Activated B cell treated with CpG ODN at 0.5 μM for 24 hours (primary cell): ENCODE measurements at regions of chr4 and their contacts with region 1.

Region 1: GRCh38 chr4:119212234-119212963 is at the start of gene USP53:
- DNase-seq: peak; percentile 95
- ATAC-seq: peak; percentile 92
- H3K4me3 Mint-ChIP-seq: peak within 1 kb of the TSS; percentile 90
- H3K27ac Mint-ChIP-seq: peak within 1 kb of the TSS; percentile 94
- H3K4me1 Mint-ChIP-seq: peaks cover 56% of the 10 kb centered on the region
- H3K27me3 Mint-ChIP-seq: no peaks in the 10 kb centered on the region
- CTCF ChIP-seq: no peak
- total RNA-seq, gene USP53: 20.4 TPM in 2 replicates

Region 2: GRCh38 chr4:118278473-118279274 is 933.7 kb before region 1 on chr4:
- CTCF ChIA-PET with region 1: no interaction called
- POLR2A ChIA-PET with region 1: no interaction called
- intact Hi-C with region 1: loop called (anchors 1 kb)
- DNase-seq: peak; percentile 90
- ATAC-seq: peak; percentile 98
- H3K4me3 Mint-ChIP-seq: peak overlapping the region; percentile 94
- H3K27ac Mint-ChIP-seq: peak overlapping the region; percentile 97
- H3K4me1 Mint-ChIP-seq: peaks cover 61% of the 10 kb centered on the region
- H3K27me3 Mint-ChIP-seq: no peaks in the 10 kb centered on the region
- CTCF ChIP-seq: no peak

Region 3: DNA sequence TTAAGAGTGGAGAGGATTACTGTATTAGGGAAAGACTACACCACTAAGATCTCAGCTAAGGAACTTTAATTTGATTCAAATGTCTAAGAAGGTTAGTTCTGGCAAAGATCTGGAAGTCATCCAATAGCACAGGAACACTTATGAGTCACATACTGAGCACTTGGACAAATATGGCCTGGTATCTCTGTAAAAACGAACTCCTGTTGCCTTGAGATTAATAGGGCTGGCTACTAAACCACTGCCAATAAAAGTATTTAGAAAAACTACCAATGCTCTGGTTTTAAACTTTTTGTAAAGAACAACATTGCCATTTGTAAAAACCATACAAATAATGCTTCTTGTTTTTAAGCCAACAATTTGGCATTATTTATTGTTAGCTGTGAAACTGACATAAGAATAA is 447.0 kb before region 1 on chr4:
- CTCF ChIA-PET with region 1: no interaction called
- POLR2A ChIA-PET with region 1: no interaction called
- intact Hi-C with region 1: loop called (anchors 5 kb)
- DNase-seq: no peak
- ATAC-seq: no peak
- H3K4me3 Mint-ChIP-seq: no peak overlapping the region
- H3K27ac Mint-ChIP-seq: no peak overlapping the region
- H3K4me1 Mint-ChIP-seq: peaks cover 8% of the 10 kb centered on the region
- H3K27me3 Mint-ChIP-seq: no peaks in the 10 kb centered on the region
- CTCF ChIP-seq: no peak

Region 4: GRCh38 chr4:119087121-119087520 is 125.3 kb before region 1 on chr4:
- CTCF ChIA-PET with region 1: no interaction called
- POLR2A ChIA-PET with region 1: interaction called, 7 read pairs
- intact Hi-C with region 1: loop called (anchors 2 kb)
- DNase-seq: no peak
- ATAC-seq: no peak
- H3K4me3 Mint-ChIP-seq: no peak overlapping the region
- H3K27ac Mint-ChIP-seq: no peak overlapping the region
- H3K4me1 Mint-ChIP-seq: peaks cover 20% of the 10 kb centered on the region
- H3K27me3 Mint-ChIP-seq: no peaks in the 10 kb centered on the region
- CTCF ChIP-seq: no peak

Region 5: DNA sequence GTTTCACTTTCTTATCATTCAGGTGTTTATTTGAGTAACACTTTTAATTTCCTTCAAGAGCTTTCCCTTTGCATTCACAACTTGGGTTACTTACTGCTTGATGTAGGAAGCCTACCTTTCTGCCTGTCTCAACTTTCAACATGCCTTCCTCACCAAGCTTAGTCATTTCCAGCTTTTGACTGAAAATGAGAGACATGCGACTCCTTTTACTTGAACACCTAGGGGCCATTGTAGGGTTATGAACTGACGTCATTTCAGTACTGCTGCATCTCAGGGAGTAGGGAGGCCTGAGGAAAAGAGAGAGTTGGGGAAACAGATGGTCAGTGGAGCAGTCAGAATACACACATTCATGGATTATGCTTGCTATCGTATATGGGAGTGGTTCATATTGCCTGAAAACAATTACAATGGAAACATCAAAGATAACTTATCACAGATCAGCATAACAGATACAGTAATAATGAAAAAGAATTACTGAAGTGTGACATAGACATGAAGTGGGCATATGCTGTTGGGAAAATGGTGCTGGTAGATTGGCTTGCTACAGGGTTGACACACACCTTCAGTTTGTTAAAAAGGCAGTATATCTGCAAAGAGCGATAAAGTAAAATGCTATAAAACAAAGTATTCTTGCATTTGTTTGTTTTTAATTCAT is 25.8 kb after region 1 on chr4:
- CTCF ChIA-PET with region 1: no interaction called
- POLR2A ChIA-PET with region 1: interaction called, 3 read pairs
- intact Hi-C with region 1: loop called (anchors 1 kb)
- DNase-seq: no peak
- ATAC-seq: peak; percentile 66
- H3K4me3 Mint-ChIP-seq: no peak overlapping the region
- H3K27ac Mint-ChIP-seq: peak overlapping the region; percentile 38
- H3K4me1 Mint-ChIP-seq: peaks cover 24% of the 10 kb centered on the region
- H3K27me3 Mint-ChIP-seq: no peaks in the 10 kb centered on the region
- CTCF ChIP-seq: no peak

Region 6: DNA sequence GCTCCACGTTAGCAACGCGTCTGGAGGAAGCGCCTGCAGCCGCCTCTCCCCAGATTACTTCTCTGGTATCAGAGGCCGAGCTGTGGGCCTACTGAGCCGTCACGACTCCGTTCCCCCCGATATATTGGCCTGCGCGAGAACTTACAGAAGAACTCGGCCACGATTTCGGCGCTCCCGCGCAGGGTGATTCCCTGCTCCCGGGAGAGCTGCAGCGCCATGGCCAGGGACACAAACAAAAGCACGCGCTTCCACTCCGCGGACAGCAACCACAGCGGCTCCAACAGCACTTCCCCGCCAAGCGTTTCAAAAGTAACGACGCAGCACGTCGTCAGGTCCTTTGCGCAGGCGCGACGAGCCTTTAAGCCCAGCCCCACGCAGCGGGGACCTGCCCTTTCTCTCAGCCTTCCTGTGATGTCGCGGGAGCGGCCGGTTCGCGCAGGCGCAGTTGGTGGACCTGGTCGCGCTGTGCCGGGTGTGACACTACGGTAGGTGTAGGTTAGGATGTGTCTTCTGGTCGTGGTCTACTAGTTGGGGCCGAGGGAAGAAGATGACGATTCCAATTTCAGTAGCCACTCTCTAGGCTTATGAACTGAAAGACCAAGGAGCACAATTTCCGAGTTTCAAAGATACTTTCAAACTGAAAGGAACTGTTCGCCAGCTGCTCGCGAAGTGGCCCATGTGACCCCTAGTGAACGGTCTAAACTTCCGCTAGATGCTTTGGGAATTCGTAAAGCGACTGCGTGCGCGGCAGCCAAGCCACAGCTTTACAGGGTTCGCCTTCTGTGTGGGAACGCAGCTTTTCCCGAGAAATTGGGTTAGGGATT is 854.3 kb after region 1 on chr4 and contains the start of gene MAD2L1:
- CTCF ChIA-PET with region 1: no interaction called
- POLR2A ChIA-PET with region 1: no interaction called
- intact Hi-C with region 1: loop called (anchors 1 kb)
- DNase-seq: peak; percentile 95
- ATAC-seq: peak; percentile 94
- H3K4me3 Mint-ChIP-seq: peak within 1 kb of the TSS; percentile 99
- H3K27ac Mint-ChIP-seq: peak within 1 kb of the TSS; percentile 97
- H3K4me1 Mint-ChIP-seq: peaks cover 31% of the 10 kb centered on the region
- H3K27me3 Mint-ChIP-seq: no peaks in the 10 kb centered on the region
- CTCF ChIP-seq: no peak
- total RNA-seq, gene MAD2L1: 3.4 and 5.4 TPM in 2 replicates